GM12878 (cell line): ENCODE measurements at regions of chr6 and their contacts with region 1.

Region 1: DNA sequence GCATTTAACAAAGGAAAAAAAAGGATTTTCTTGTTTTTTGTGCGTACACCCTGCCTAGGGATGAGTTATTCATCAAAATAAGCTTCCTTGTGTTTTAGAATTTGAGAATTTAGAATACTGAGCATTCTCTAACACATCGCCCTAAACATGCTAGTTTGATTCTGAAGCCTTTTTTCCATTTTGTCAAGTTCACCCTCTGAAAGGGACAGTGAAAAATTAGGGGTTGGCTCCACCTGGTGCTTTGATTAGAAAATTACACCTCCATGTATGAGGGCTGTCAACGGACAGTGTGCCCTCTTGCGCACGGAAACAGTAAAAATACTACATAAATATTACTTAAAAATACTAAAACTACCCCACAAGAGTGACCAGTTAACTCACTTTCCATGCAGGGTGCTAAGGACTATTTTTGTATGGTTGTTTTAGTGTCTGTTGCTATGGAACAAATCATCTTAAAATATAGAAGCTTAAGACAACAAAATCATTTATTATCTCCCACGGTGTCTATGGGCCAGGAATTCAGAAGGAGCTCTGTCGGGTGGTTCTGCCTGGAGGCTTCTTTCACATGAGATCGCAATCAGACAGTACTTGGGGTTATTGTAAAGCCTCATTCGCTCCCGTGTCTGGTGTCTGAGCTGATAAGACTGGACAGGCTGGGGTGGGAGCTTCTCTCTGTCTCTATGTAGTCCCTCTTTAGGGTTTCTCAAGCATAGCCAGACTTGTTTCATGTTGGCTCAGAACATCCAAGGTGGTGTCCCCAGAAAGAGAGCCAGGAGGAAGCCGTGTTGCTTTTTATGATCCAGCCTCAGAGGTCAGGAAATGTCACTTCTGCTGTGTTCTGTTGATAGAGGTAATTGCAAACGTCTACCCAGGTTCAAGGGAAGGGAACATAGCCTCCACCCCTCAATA is 41.1 kb upstream of the TMEM170B start:
- DNase-seq: peak; percentile 84
- ATAC-seq: peak; percentile 77
- H3K4me3 ChIP-seq: no peak overlapping the region
- H3K27ac ChIP-seq: peak overlapping the region; percentile 68
- H3K4me1 ChIP-seq: peaks cover 56% of the 10 kb centered on the region
- H3K27me3 ChIP-seq: no peaks in the 10 kb centered on the region
- CTCF ChIP-seq: peak; percentile 76 to 96 (median 88)
- EP300 ChIP-seq: no peak
- POLR2A ChIP-seq: no peak
- RAD21 ChIP-seq: peak; percentile 99

Region 2: GRCh38 chr6:10954590-10955010 is 541.8 kb before region 1 on chr6:
- CTCF ChIA-PET with region 1: interaction called, 60 read pairs
- POLR2A ChIA-PET with region 1: no interaction called
- RAD21 ChIA-PET with region 1: interaction called, 30 read pairs
- SMC1A ChIA-PET with region 1: interaction called, 17 read pairs
- in situ Hi-C with region 1: loop called (anchors 5 kb)
- intact Hi-C with region 1: loop called (anchors 2 kb)
- DNase-seq: peak; percentile 31
- ATAC-seq: peak; percentile 99
- H3K4me3 ChIP-seq: no peak overlapping the region
- H3K27ac ChIP-seq: no peak overlapping the region
- H3K4me1 ChIP-seq: no peaks in the 10 kb centered on the region
- H3K27me3 ChIP-seq: no peaks in the 10 kb centered on the region
- CTCF ChIP-seq: peak; percentile 89 to 97 (median 92)
- EP300 ChIP-seq: no peak
- POLR2A ChIP-seq: no peak
- RAD21 ChIP-seq: peak; percentile 70

Region 3: GRCh38 chr6:11025921-11026635 is 470.3 kb before region 1 on chr6:
- CTCF ChIA-PET with region 1: no interaction called
- POLR2A ChIA-PET with region 1: no interaction called
- RAD21 ChIA-PET with region 1: no interaction called
- SMC1A ChIA-PET with region 1: no interaction called
- in situ Hi-C with region 1: no loop called
- intact Hi-C with region 1: no loop called
- DNase-seq: no peak
- ATAC-seq: peak; percentile 81
- H3K4me3 ChIP-seq: peak overlapping the region; percentile 26; the same call in 1 of the 2 replicates
- H3K27ac ChIP-seq: no peak overlapping the region
- H3K4me1 ChIP-seq: peaks cover 8% of the 10 kb centered on the region
- H3K27me3 ChIP-seq: peaks cover 2 to 4% of the 10 kb centered on the region in 2 experiments; a peak in 3 of 4 replicates
- CTCF ChIP-seq: no peak
- EP300 ChIP-seq: no peak
- POLR2A ChIP-seq: no peak
- RAD21 ChIP-seq: no peak

Region 4: DNA sequence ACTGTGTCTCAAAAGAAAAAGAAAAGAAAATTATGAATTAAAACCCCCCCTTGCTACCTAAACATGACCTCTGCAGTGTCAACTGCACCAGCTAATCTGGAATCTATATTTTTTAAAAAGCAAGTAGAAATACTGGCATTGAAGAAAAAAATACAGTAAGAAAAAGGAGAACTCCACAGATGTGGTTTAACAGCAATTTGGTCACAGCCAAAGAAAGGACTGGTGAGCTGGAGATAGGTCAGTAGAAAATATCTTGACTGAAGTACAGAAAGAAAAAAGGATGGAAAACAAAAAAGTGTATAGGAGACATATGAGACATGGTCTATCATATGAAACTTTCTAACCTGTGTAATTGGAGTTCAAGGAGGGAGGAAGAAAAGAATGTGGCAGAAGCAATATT is 340.8 kb before region 1 on chr6:
- CTCF ChIA-PET with region 1: interaction called, 59 read pairs
- POLR2A ChIA-PET with region 1: interaction called, 5 read pairs
- RAD21 ChIA-PET with region 1: interaction called, 25 read pairs
- SMC1A ChIA-PET with region 1: interaction called, 208 read pairs
- in situ Hi-C with region 1: no loop called
- intact Hi-C with region 1: no loop called
- DNase-seq: no peak
- ATAC-seq: no peak
- H3K4me3 ChIP-seq: no peak overlapping the region
- H3K27ac ChIP-seq: no peak overlapping the region
- H3K4me1 ChIP-seq: no peaks in the 10 kb centered on the region
- H3K27me3 ChIP-seq: no peaks in the 10 kb centered on the region
- CTCF ChIP-seq: no peak
- EP300 ChIP-seq: no peak
- POLR2A ChIP-seq: no peak
- RAD21 ChIP-seq: no peak

Region 5: DNA sequence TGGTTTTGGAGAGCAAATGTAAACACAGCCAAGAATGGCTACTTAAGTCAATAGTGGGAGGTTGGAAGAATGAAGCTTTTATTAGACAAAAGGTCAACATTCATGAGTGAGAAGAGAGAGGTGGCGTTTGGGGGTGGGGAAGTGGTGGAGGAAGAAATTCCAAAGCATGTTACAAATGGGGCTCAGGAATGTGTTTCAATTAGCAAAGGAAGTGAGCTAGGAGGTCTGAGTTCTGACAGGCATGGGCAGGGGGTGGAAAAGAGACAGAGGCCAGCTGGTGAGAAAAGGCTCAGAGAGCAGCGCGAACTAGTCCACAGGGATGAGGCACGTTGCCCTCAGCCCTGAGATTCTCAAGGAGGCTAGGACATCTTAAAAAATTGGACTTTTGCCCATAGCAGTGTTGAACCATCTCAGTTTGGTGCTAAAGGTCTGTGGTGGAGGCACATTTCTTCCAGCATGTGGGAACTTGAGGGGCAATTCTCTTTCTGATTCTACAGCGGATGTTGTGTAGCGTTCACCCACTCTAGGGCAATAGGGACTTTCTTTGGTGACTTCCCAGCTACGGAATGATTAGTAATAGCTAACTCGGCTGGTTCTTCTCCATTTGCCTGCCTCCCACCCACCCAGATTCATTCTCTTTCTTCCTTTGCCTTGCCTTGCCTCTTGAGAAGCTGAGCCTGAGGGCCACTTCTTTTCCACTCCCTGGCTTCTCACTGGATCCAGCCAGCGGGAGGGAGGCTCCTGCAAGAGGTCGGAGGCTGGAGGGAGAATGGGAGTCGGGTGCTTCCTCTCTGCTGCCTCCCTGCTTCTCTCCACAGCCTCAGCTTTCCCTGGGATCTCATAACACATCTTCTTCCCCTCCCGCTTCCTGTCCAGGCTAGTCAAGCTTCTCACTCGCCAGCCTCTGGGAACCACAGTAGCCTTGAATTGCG is 218.9 kb before region 1 on chr6:
- CTCF ChIA-PET with region 1: interaction called, 29 read pairs
- POLR2A ChIA-PET with region 1: interaction called, 4 read pairs
- RAD21 ChIA-PET with region 1: interaction called, 90 read pairs
- SMC1A ChIA-PET with region 1: interaction called, 98 read pairs
- in situ Hi-C with region 1: no loop called
- intact Hi-C with region 1: loop called (anchors 1 kb)
- DNase-seq: peak; percentile 94
- ATAC-seq: peak; percentile 78
- H3K4me3 ChIP-seq: peak overlapping the region; percentile 23; the same call in 1 of the 2 replicates
- H3K27ac ChIP-seq: peak overlapping the region; percentile 95
- H3K4me1 ChIP-seq: peaks cover 46% of the 10 kb centered on the region
- H3K27me3 ChIP-seq: no peaks in the 10 kb centered on the region
- CTCF ChIP-seq: no peak
- EP300 ChIP-seq: peak; percentile 65 to 83; a peak in 2 of 4 replicates
- POLR2A ChIP-seq: peak; percentile 55
- RAD21 ChIP-seq: peak; percentile 12; the same call in 1 of the 2 replicates

Region 6: GRCh38 chr6:11374036-11375010 is 122.1 kb before region 1 on chr6:
- CTCF ChIA-PET with region 1: interaction called, 10 read pairs
- POLR2A ChIA-PET with region 1: interaction called, 82 read pairs
- RAD21 ChIA-PET with region 1: interaction called, 263 read pairs
- SMC1A ChIA-PET with region 1: interaction called, 250 read pairs
- in situ Hi-C with region 1: no loop called
- intact Hi-C with region 1: loop called (anchors 2 kb)
- DNase-seq: peak; percentile 96
- ATAC-seq: peak; percentile 85
- H3K4me3 ChIP-seq: 0 out of 2 replicates have a peak overlapping the region, but pooled peaks have one; percentile 44
- H3K27ac ChIP-seq: peak overlapping the region; percentile 89
- H3K4me1 ChIP-seq: peaks cover 44% of the 10 kb centered on the region
- H3K27me3 ChIP-seq: no peaks in the 10 kb centered on the region
- CTCF ChIP-seq: no peak
- EP300 ChIP-seq: peak; percentile 83 to 95
- POLR2A ChIP-seq: peak; percentile 43; the same call in 1 of the 2 replicates
- RAD21 ChIP-seq: peak; percentile 25

Region 7: GRCh38 chr6:11460001-11460668 is 36.3 kb before region 1 on chr6:
- CTCF ChIA-PET with region 1: interaction called, 106 read pairs
- POLR2A ChIA-PET with region 1: interaction called, 54 read pairs
- RAD21 ChIA-PET with region 1: interaction called, 348 read pairs
- SMC1A ChIA-PET with region 1: interaction called, 165 read pairs
- in situ Hi-C with region 1: no loop called
- intact Hi-C with region 1: loop called (anchors 1 kb)
- DNase-seq: peak; percentile 75
- ATAC-seq: peak; percentile 65
- H3K4me3 ChIP-seq: peak overlapping the region; percentile 28; the same call in 1 of the 2 replicates
- H3K27ac ChIP-seq: peak overlapping the region; percentile 96
- H3K4me1 ChIP-seq: peaks cover 40% of the 10 kb centered on the region
- H3K27me3 ChIP-seq: no peaks in the 10 kb centered on the region
- CTCF ChIP-seq: peak in 2 of 3 experiments; percentile 17 to 21; a peak in 3 of 6 replicates
- EP300 ChIP-seq: 0 out of 4 replicates have a peak, but pooled peaks of 1 of the 2 experiments have one; percentile 7
- POLR2A ChIP-seq: 0 out of 2 replicates have a peak, but pooled peaks have one; percentile 37
- RAD21 ChIP-seq: no peak; the same call in 1 of the 2 replicates

Region 8: DNA sequence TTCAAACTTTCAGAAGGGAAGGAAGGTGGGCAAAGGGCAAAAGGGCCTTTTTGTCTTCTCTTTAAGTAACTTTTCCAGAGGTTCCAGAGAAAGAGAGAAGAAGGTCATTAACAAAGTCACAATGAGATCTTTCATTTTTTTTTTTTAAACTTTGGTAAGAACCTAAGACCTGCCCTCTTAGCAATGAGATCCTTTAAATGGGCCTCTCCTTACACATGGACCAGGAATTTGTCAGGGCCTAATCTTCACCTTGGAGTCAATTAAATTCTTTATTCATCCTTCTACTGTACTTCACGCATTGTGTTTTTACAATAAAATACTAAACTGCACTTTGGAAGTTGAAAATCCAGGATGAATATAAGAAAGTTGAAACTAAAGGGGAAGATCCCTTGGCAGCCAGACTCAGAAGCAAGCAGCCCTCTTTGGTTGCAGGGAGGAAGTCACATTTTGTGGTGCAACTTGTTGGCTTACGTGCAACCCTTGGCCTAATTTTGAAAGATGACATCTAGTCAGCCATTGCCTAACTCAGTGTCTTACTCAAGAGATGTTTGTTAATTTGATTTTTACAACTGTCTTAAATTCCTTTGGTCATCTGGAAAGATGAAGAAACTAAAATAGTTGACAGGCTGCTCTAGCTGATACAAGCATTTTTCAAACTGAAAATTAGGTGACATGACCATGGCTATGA is 29.2 kb after region 1 on chr6:
- CTCF ChIA-PET with region 1: interaction called, 10 read pairs
- POLR2A ChIA-PET with region 1: no interaction called
- RAD21 ChIA-PET with region 1: interaction called, 6 read pairs
- SMC1A ChIA-PET with region 1: interaction called, 6 read pairs
- in situ Hi-C with region 1: no loop called
- intact Hi-C with region 1: no loop called
- DNase-seq: no peak
- ATAC-seq: peak; percentile 29; the same call in 1 of the 3 replicates
- H3K4me3 ChIP-seq: no peak overlapping the region
- H3K27ac ChIP-seq: no peak overlapping the region
- H3K4me1 ChIP-seq: no peaks in the 10 kb centered on the region
- H3K27me3 ChIP-seq: no peaks in the 10 kb centered on the region
- CTCF ChIP-seq: no peak
- EP300 ChIP-seq: no peak
- POLR2A ChIP-seq: no peak
- RAD21 ChIP-seq: no peak